Motor neuron (in vitro differentiated cells): ENCODE measurements at regions of chr10 and their contacts with region 1.

Region 1: GRCh38 chr10:61903221-61903927 is 1.9 kb downstream of the ARID5B start:
- ATAC-seq: peak; percentile 23 to 71 (median 64)
- H3K4me3 ChIP-seq: peak overlapping the region; percentile 63 to 92 (median 86)
- H3K27ac ChIP-seq: peak overlapping the region; percentile 1 to 50
- H3K4me1 ChIP-seq: peaks cover 5 to 27% of the 10 kb centered on the region in 2 donors

Region 2: DNA sequence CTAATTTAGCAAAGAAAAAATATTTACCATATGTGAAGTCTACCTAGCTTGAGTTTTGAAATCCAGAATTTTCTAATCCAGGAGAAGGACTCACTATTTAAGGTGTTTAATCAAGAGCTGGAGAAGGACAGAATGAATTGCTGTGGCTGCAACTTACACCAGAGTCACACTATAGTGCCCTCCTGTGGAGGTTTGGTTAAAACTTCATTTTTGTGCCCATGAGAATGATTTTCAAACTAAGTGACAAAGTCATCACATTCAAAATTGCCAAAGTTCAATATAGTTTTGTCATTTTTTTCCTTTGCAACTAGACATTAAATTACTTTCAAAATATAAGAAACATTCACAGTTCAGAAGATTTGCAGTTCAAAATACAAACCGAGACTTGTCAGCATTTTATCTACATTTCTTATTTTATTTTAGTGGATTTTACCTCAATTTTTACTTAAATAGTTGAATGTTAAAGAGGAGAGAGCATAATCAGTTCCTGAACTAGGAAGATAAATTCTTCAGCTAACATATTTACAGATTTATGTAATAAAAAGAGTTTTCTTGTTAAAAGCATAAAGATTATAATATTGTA is 169.9 kb before region 1 on chr10:
- in situ Hi-C with region 1: no loop called
- ATAC-seq: peak in 2 of 8 experiments; percentile 27 to 33
- H3K4me3 ChIP-seq: no peak overlapping the region
- H3K27ac ChIP-seq: no peak overlapping the region
- H3K4me1 ChIP-seq: no peaks in the 10 kb centered on the region

Region 3: GRCh38 chr10:61978965-61979364 is 75.6 kb after region 1 on chr10:
- in situ Hi-C with region 1: no loop called
- ATAC-seq: no peak
- H3K4me3 ChIP-seq: no peak overlapping the region
- H3K27ac ChIP-seq: no peak overlapping the region
- H3K4me1 ChIP-seq: peaks cover 10 to 16% of the 10 kb centered on the region in 2 donors

Region 4: GRCh38 chr10:62025901-62026879 is 122.8 kb after region 1 on chr10:
- in situ Hi-C with region 1: loop called in 2 of 9 experiments (anchors 10 to 25 kb)
- ATAC-seq: no peak
- H3K4me3 ChIP-seq: no peak overlapping the region
- H3K27ac ChIP-seq: no peak overlapping the region
- H3K4me1 ChIP-seq: peaks cover 3% of the 10 kb centered on the region in 2 donors

Region 5: GRCh38 chr10:62244780-62245467 is 341.6 kb after region 1 on chr10:
- in situ Hi-C with region 1: loop called in 2 of 9 experiments (anchors 25 kb)
- ATAC-seq: peak; percentile 62 to 88 (median 72)
- H3K4me3 ChIP-seq: no peak overlapping the region
- H3K27ac ChIP-seq: no peak overlapping the region
- H3K4me1 ChIP-seq: peaks cover 0 to 4% of the 10 kb centered on the region in 2 donors